ENCODE measurements at regions of chr7 and their contacts with region 1.

Region 1: DNA sequence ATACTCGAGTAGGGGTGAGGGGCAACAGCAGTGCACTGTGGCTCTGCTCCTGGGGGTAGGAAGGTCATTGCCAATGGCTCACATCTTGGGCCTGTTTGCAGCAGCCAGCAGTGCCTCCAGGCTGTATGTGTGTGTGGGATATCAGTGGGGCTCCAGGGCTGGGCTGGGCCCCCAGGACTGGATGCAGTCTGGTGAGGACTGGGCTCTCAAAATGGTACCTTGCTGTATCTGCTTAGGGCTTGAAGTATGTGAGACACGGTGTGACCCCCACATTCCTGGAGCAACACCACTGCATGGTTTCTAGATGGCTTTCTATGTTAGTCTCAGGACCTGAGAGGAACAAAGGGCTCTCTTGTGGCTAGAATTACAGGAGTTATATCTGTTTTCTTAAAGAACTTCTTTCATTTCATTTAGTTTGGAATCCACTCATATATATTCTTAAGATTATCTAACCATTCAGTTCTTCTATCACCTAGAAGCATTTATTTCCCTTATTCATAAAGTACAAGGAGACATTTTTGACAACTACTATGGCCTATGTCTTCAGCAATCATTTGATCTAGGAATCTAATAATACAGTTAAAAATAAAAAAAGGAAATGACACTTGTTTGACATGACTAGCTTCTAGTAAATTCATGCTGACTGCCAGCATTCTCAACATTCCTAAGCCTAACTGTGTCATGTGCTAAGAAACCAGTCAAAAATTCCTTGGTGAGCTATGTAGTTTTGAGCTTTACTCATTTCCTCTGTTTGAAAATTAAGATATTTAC is 443.2 kb upstream of the SEMA3A start:
- DNase-seq: peak in 1 of 2 experiments; percentile 10
- H3K4me3 ChIP-seq: no peak overlapping the region
- H3K4me3 Mint-ChIP-seq: no peak overlapping the region
- H3K27ac Mint-ChIP-seq: peak overlapping the region; percentile 63
- H3K4me1 ChIP-seq: peaks cover 17% of the 10 kb centered on the region
- H3K4me1 Mint-ChIP-seq: peaks cover 12% of the 10 kb centered on the region
- H3K27me3 ChIP-seq: no peaks in the 10 kb centered on the region
- H3K27me3 Mint-ChIP-seq: no peaks in the 10 kb centered on the region
- CTCF ChIP-seq: no peak

Region 2: GRCh38 chr7:84664581-84664980 is 26.8 kb after region 1 on chr7:
- CTCF ChIA-PET with region 1: no interaction called
- POLR2A ChIA-PET with region 1: no interaction called
- intact Hi-C with region 1: loop called (anchors 1 kb)
- DNase-seq: no peak
- H3K4me3 ChIP-seq: no peak overlapping the region
- H3K4me3 Mint-ChIP-seq: peak overlapping the region; percentile 35
- H3K27ac Mint-ChIP-seq: peak overlapping the region; percentile 8
- H3K4me1 ChIP-seq: peaks cover 28% of the 10 kb centered on the region
- H3K4me1 Mint-ChIP-seq: peaks cover 22% of the 10 kb centered on the region
- H3K27me3 ChIP-seq: no peaks in the 10 kb centered on the region
- H3K27me3 Mint-ChIP-seq: no peaks in the 10 kb centered on the region
- CTCF ChIP-seq: no peak

Measured in Caco-2 (cell line).